CD4-positive, alpha-beta memory T cell (primary cell): ENCODE measurements at regions of chr21 and their contacts with region 1.

Region 1: DNA sequence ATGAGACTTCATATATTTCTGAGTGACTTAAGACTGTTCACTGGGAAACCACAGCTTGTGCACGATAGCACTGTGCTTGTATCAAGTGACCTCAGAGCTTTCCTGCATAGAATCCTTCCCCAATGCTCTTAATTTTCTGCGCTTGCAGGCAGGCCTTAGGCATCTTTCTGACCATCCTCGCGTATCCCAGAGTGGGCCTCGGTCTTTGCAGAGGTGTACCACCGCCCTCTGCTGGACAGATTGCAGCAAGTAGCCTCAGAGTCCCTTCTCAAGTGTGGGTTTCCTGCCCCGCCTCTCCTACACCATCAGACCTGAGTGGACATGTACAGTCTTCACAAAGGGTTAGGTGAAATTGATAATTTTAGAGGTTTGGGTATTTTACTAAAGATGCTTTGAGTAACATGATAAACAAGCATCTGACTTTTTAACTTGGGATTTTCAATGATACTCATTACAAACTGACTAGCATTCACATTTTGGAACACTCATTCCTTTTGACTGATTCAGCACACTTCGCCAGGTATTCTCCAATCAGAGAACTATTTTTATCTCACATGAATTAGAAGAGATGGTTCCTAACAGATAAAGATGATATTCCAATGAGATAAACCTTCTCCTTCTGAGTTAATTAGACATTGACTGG is 246.5 kb upstream of the USP25 start:
- DNase-seq: peak; percentile 62 to 68 (median 65)
- H3K4me3 ChIP-seq: no peak overlapping the region
- H3K4me3 Mint-ChIP-seq: peak overlapping the region in 3 of 8 donors; percentile 4 to 32 (median 24)
- H3K27ac ChIP-seq: no peak overlapping the region
- H3K27ac Mint-ChIP-seq: peak overlapping the region in 1 of 7 donors; percentile 61
- H3K4me1 ChIP-seq: peaks cover 5% of the 10 kb centered on the region
- H3K4me1 Mint-ChIP-seq: peaks cover 10 to 21% (median 15%) of the 10 kb centered on the region in 4 donors
- H3K27me3 ChIP-seq: no peaks in the 10 kb centered on the region
- H3K27me3 Mint-ChIP-seq: no peaks in the 10 kb centered on the region

Region 2: DNA sequence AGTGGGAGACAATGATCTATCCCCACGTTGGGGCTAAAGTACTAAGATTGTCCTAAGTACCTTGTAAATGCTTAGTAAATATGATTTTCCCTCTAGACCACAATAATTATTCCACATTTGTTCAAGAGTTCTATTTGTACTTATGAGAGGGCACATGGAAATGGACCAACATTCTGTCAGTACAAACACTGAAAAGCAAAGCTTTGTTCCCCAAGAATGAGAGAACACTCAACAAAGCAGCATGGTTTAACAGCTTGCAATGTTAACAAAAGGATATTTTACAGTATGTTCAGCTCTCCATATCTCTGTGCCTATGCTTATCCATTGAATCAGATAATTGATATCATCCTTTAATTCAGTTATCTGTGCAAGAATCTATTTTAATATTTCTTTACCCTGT is 1231.9 kb before region 1 on chr21:
- CTCF ChIA-PET with region 1: no interaction called
- POLR2A ChIA-PET with region 1: no interaction called
- intact Hi-C with region 1: loop called (anchors 5 kb)
- DNase-seq: no peak
- H3K4me3 ChIP-seq: no peak overlapping the region
- H3K4me3 Mint-ChIP-seq: no peak overlapping the region
- H3K27ac ChIP-seq: no peak overlapping the region
- H3K27ac Mint-ChIP-seq: no peak overlapping the region
- H3K4me1 ChIP-seq: peaks cover 4% of the 10 kb centered on the region
- H3K4me1 Mint-ChIP-seq: peaks cover 4 to 7% (median 5%) of the 10 kb centered on the region in 4 donors
- H3K27me3 ChIP-seq: no peaks in the 10 kb centered on the region
- H3K27me3 Mint-ChIP-seq: peaks cover 5 to 11% of the 10 kb centered on the region in 2 donors

Region 3: DNA sequence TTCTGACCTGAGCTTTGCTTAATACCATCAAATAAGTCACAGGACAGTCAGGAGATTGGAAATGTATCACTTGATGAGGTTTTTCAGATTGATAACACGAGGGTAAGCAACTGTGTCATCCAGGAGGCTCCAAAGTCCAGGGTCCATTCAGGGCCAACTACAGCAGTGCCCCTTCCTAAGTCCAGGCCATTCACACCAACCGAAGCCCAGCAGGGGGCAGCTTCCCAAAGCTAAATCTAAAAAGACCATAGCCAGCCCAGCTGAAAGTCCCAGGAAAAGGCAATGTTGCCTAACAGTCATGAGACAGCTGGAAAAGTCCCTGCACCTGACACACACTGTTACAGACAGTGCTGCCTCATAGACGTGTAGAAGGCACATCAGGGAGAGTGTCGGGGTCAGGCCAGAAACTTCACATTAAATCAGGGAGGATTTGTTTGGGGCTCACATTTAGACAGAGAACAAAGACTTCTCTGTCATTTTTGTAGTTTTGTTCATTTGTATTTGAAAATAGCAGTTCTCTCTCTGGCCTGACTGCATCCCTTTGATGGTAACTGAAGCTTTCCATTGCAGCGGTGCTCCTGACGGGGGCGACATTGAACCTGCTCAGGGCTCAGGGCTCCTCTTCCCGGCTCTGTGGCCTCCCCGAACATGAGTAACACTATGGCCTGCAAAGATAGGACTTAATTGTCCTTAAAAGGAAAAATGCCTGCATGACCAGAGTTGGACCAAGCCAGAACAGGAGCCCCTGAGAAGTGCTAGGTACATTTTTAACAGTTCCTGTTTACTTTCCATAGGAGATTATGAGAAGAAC is 618.8 kb before region 1 on chr21:
- CTCF ChIA-PET with region 1: interaction called, 7 read pairs
- POLR2A ChIA-PET with region 1: no interaction called
- intact Hi-C with region 1: loop called (anchors 1 kb)
- DNase-seq: peak in 2 of 5 donors; percentile 3 to 4
- H3K4me3 ChIP-seq: no peak overlapping the region
- H3K4me3 Mint-ChIP-seq: no peak overlapping the region
- H3K27ac ChIP-seq: no peak overlapping the region
- H3K27ac Mint-ChIP-seq: no peak overlapping the region
- H3K4me1 ChIP-seq: no peaks in the 10 kb centered on the region
- H3K4me1 Mint-ChIP-seq: peaks cover 0 to 1% (median 0%) of the 10 kb centered on the region in 4 donors
- H3K27me3 ChIP-seq: no peaks in the 10 kb centered on the region
- H3K27me3 Mint-ChIP-seq: no peaks in the 10 kb centered on the region

Region 4: GRCh38 chr21:15152591-15152990 is 330.7 kb before region 1 on chr21:
- CTCF ChIA-PET with region 1: no interaction called
- POLR2A ChIA-PET with region 1: no interaction called
- intact Hi-C with region 1: no loop called
- DNase-seq: no peak
- H3K4me3 ChIP-seq: no peak overlapping the region
- H3K4me3 Mint-ChIP-seq: no peak overlapping the region
- H3K27ac ChIP-seq: no peak overlapping the region
- H3K27ac Mint-ChIP-seq: no peak overlapping the region
- H3K4me1 ChIP-seq: no peaks in the 10 kb centered on the region
- H3K4me1 Mint-ChIP-seq: no peaks in the 10 kb centered on the region
- H3K27me3 ChIP-seq: no peaks in the 10 kb centered on the region
- H3K27me3 Mint-ChIP-seq: peaks cover 2 to 5% of the 10 kb centered on the region in 2 donors

Region 5: GRCh38 chr21:15472108-15473040 is 10.9 kb before region 1 on chr21:
- CTCF ChIA-PET with region 1: interaction called, 16 read pairs
- POLR2A ChIA-PET with region 1: no interaction called
- intact Hi-C with region 1: no loop called
- DNase-seq: no peak
- H3K4me3 ChIP-seq: no peak overlapping the region
- H3K4me3 Mint-ChIP-seq: no peak overlapping the region
- H3K27ac ChIP-seq: no peak overlapping the region
- H3K27ac Mint-ChIP-seq: no peak overlapping the region
- H3K4me1 ChIP-seq: no peaks in the 10 kb centered on the region
- H3K4me1 Mint-ChIP-seq: no peaks in the 10 kb centered on the region
- H3K27me3 ChIP-seq: no peaks in the 10 kb centered on the region
- H3K27me3 Mint-ChIP-seq: peaks cover 3 to 9% of the 10 kb centered on the region in 2 donors

Region 6: GRCh38 chr21:15514073-15514946 is 31.1 kb after region 1 on chr21:
- CTCF ChIA-PET with region 1: interaction called, 22 read pairs
- POLR2A ChIA-PET with region 1: no interaction called
- intact Hi-C with region 1: loop called (anchors 1 kb)
- DNase-seq: peak; percentile 74 to 84 (median 77)
- H3K4me3 ChIP-seq: peak overlapping the region in 1 of 2 donors; percentile 39
- H3K4me3 Mint-ChIP-seq: peak overlapping the region; percentile 31 to 86 (median 66)
- H3K27ac ChIP-seq: peak overlapping the region; percentile 30
- H3K27ac Mint-ChIP-seq: peak overlapping the region; percentile 19 to 94 (median 87)
- H3K4me1 ChIP-seq: peaks cover 33% of the 10 kb centered on the region
- H3K4me1 Mint-ChIP-seq: peaks cover 17 to 26% (median 23%) of the 10 kb centered on the region in 4 donors
- H3K27me3 ChIP-seq: no peaks in the 10 kb centered on the region
- H3K27me3 Mint-ChIP-seq: no peaks in the 10 kb centered on the region

Region 7: GRCh38 chr21:15552914-15553494 is 69.7 kb after region 1 on chr21:
- CTCF ChIA-PET with region 1: interaction called, 21 read pairs
- POLR2A ChIA-PET with region 1: no interaction called
- intact Hi-C with region 1: loop called (anchors 1 kb)
- DNase-seq: peak in 4 of 5 donors; percentile 21 to 38 (median 34)
- H3K4me3 ChIP-seq: no peak overlapping the region
- H3K4me3 Mint-ChIP-seq: peak overlapping the region in 1 of 8 donors; percentile 21
- H3K27ac ChIP-seq: no peak overlapping the region
- H3K27ac Mint-ChIP-seq: no peak overlapping the region
- H3K4me1 ChIP-seq: peaks cover 11% of the 10 kb centered on the region
- H3K4me1 Mint-ChIP-seq: peaks cover 9 to 10% (median 10%) of the 10 kb centered on the region in 4 donors
- H3K27me3 ChIP-seq: no peaks in the 10 kb centered on the region
- H3K27me3 Mint-ChIP-seq: peaks cover 0 to 4% of the 10 kb centered on the region in 2 donors

Region 8: GRCh38 chr21:15564907-15565306 is 81.6 kb after region 1 on chr21:
- CTCF ChIA-PET with region 1: no interaction called
- POLR2A ChIA-PET with region 1: no interaction called
- intact Hi-C with region 1: no loop called
- DNase-seq: no peak
- H3K4me3 ChIP-seq: no peak overlapping the region
- H3K4me3 Mint-ChIP-seq: no peak overlapping the region
- H3K27ac ChIP-seq: no peak overlapping the region
- H3K27ac Mint-ChIP-seq: no peak overlapping the region
- H3K4me1 ChIP-seq: no peaks in the 10 kb centered on the region
- H3K4me1 Mint-ChIP-seq: peaks cover 0 to 5% (median 3%) of the 10 kb centered on the region in 4 donors
- H3K27me3 ChIP-seq: no peaks in the 10 kb centered on the region
- H3K27me3 Mint-ChIP-seq: peaks cover 15 to 20% of the 10 kb centered on the region in 2 donors